B cell (primary cell): ENCODE measurements at regions of chr2 and their contacts with region 1.

Region 1: GRCh38 chr2:98012561-98012991 is 16.8 kb upstream of the TMEM131 start:
- DNase-seq: peak; percentile 91
- ATAC-seq: peak; percentile 86
- H3K4me3 ChIP-seq: peak overlapping the region in 4 of 5 experiments; percentile 9 to 55 (median 30)
- H3K4me3 Mint-ChIP-seq: peak overlapping the region; percentile 78
- H3K27ac ChIP-seq: peak overlapping the region; percentile 90 to 94
- H3K27ac Mint-ChIP-seq: peak overlapping the region; percentile 98
- H3K4me1 ChIP-seq: peaks cover 68 to 76% of the 10 kb centered on the region in 2 donors
- H3K4me1 Mint-ChIP-seq: peaks cover 66% of the 10 kb centered on the region
- H3K27me3 ChIP-seq: no peaks in the 10 kb centered on the region
- H3K27me3 Mint-ChIP-seq: no peaks in the 10 kb centered on the region
- CTCF ChIP-seq: no peak

Region 2: DNA sequence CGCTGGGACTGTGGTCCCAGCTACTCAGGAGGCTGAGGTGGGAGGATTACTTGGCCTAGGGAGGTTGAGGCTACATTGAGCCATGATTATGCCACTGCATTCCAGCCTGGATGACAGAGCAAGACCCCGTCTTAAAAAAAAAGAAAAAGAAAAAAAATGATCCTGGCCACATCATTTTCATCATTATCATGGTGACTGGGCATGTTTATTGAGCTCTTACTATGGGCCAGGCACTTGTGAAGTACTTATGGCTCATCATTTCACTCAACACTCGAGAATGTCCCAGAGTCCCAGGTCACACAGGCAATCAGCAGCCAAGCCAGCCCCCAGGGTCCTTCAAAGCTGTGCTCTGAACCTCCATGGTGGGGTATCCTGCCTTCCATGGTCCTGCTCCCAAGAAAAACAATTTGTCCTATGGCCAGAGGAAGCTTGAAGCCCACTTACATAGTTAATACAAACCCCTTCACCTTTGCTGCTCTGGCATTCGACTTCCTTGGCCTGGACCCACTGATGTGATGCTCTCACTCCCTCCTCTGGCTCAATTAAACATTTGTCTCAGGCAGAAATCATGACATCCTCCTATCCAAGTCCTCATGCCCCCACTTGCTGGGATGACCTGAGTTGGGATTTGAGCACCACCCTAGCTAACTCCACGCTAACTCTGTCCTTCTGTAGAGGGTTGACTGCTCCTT is 1255.6 kb before region 1 on chr2:
- CTCF ChIA-PET with region 1: no interaction called
- POLR2A ChIA-PET with region 1: no interaction called
- intact Hi-C with region 1: no loop called
- DNase-seq: no peak
- ATAC-seq: no peak
- H3K4me3 ChIP-seq: no peak overlapping the region
- H3K4me3 Mint-ChIP-seq: no peak overlapping the region
- H3K27ac ChIP-seq: no peak overlapping the region
- H3K27ac Mint-ChIP-seq: no peak overlapping the region
- H3K4me1 ChIP-seq: peaks cover 20 to 24% of the 10 kb centered on the region in 2 donors
- H3K4me1 Mint-ChIP-seq: peaks cover 26% of the 10 kb centered on the region
- H3K27me3 ChIP-seq: peaks cover 0 to 5% (median 0%) of the 10 kb centered on the region in 4 experiments
- H3K27me3 Mint-ChIP-seq: no peaks in the 10 kb centered on the region
- CTCF ChIP-seq: no peak

Region 3: DNA sequence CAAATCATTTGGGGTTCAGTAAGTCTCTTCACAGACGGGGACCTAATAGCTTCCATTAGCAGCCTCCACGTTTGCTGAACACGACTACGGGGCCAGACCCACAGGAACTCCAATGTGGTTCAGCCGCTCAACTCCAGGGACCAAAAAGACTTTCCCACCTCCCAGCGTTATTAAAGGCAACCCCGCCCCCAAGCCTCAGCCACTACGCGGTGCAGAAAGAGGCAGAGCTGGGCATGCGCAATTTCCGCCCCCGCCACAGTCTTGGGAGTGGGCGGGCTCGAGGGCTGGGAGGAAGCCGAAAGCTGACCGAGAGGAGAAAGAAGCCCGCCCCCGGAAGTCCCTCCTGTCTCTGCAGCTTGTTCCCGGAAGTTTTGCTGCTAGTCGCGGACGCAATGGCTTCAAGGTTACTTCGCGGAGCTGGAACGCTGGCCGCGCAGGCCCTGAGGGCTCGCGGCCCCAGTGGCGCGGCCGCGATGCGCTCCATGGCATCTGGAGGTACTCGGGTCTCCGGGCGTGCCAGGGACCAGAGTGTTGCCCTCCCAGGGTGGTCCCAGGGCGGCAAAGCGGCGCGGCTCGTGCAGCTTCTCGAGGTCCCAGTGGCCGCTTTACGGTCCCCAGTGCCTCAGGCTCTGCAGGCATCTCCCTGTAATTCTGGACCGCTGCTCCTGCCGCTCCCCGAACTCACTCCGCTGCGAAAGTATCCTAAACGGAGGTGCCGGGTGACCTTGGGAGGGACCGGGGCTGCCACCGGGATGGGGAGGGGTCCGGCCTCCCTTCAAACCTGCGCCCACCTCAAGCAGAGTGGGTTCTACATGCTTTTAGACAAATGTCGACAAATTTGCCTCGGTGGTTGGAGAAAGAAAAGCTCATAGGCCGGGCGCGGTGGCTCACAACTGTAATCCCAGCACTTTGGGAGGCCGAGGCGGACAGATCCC is 366.6 kb before region 1 on chr2 and contains the start of gene COX5B:
- CTCF ChIA-PET with region 1: no interaction called
- POLR2A ChIA-PET with region 1: no interaction called
- intact Hi-C with region 1: loop called (anchors 5 kb)
- DNase-seq: peak; percentile 98
- ATAC-seq: peak; percentile 98
- H3K4me3 ChIP-seq: peak within 1 kb of the TSS; percentile 61 to 97 (median 97)
- H3K4me3 Mint-ChIP-seq: peak within 1 kb of the TSS; percentile 100
- H3K27ac ChIP-seq: peak within 1 kb of the TSS; percentile 72 to 87
- H3K27ac Mint-ChIP-seq: peak within 1 kb of the TSS; percentile 97
- H3K4me1 ChIP-seq: peaks cover 14 to 15% of the 10 kb centered on the region in 2 donors
- H3K4me1 Mint-ChIP-seq: peaks cover 21% of the 10 kb centered on the region
- H3K27me3 ChIP-seq: no peaks in the 10 kb centered on the region
- H3K27me3 Mint-ChIP-seq: peaks cover 3% of the 10 kb centered on the region
- CTCF ChIP-seq: no peak
- total RNA-seq, gene COX5B: 104 and 111 TPM in 2 replicates

Region 4: GRCh38 chr2:97806738-97807618 is 205.6 kb before region 1 on chr2:
- CTCF ChIA-PET with region 1: interaction called, 5 read pairs
- POLR2A ChIA-PET with region 1: no interaction called
- intact Hi-C with region 1: loop called (anchors 5 kb)
- DNase-seq: peak; percentile 86
- ATAC-seq: peak; percentile 97
- H3K4me3 ChIP-seq: no peak overlapping the region
- H3K4me3 Mint-ChIP-seq: no peak overlapping the region
- H3K27ac ChIP-seq: peak overlapping the region in 1 of 2 donors; percentile 56
- H3K27ac Mint-ChIP-seq: no peak overlapping the region
- H3K4me1 ChIP-seq: peaks cover 4 to 7% of the 10 kb centered on the region in 2 donors
- H3K4me1 Mint-ChIP-seq: no peaks in the 10 kb centered on the region
- H3K27me3 ChIP-seq: no peaks in the 10 kb centered on the region
- H3K27me3 Mint-ChIP-seq: no peaks in the 10 kb centered on the region
- CTCF ChIP-seq: peak; percentile 97

Region 5: GRCh38 chr2:97911206-97911921 is 101.2 kb before region 1 on chr2:
- CTCF ChIA-PET with region 1: no interaction called
- POLR2A ChIA-PET with region 1: interaction called, 11 read pairs
- intact Hi-C with region 1: no loop called
- DNase-seq: peak; percentile 71
- ATAC-seq: peak; percentile 73
- H3K4me3 ChIP-seq: no peak overlapping the region
- H3K4me3 Mint-ChIP-seq: peak overlapping the region; percentile 17
- H3K27ac ChIP-seq: peak overlapping the region in 1 of 2 donors; percentile 37
- H3K27ac Mint-ChIP-seq: peak overlapping the region; percentile 4
- H3K4me1 ChIP-seq: peaks cover 63 to 73% of the 10 kb centered on the region in 2 donors
- H3K4me1 Mint-ChIP-seq: peaks cover 89% of the 10 kb centered on the region
- H3K27me3 ChIP-seq: no peaks in the 10 kb centered on the region
- H3K27me3 Mint-ChIP-seq: no peaks in the 10 kb centered on the region
- CTCF ChIP-seq: no peak

Region 6: GRCh38 chr2:98026927-98027522 is 14.4 kb after region 1 on chr2:
- CTCF ChIA-PET with region 1: interaction called, 11 read pairs
- POLR2A ChIA-PET with region 1: interaction called, 16 read pairs
- intact Hi-C with region 1: loop called (anchors 1 kb)
- DNase-seq: peak; percentile 84
- ATAC-seq: peak; percentile 77
- H3K4me3 ChIP-seq: peak overlapping the region in 4 of 5 experiments; percentile 7 to 58 (median 35)
- H3K4me3 Mint-ChIP-seq: peak overlapping the region; percentile 84
- H3K27ac ChIP-seq: peak overlapping the region; percentile 80 to 82
- H3K27ac Mint-ChIP-seq: peak overlapping the region; percentile 88
- H3K4me1 ChIP-seq: peaks cover 51 to 67% of the 10 kb centered on the region in 2 donors
- H3K4me1 Mint-ChIP-seq: peaks cover 52% of the 10 kb centered on the region
- H3K27me3 ChIP-seq: no peaks in the 10 kb centered on the region
- H3K27me3 Mint-ChIP-seq: no peaks in the 10 kb centered on the region
- CTCF ChIP-seq: no peak

Region 7: DNA sequence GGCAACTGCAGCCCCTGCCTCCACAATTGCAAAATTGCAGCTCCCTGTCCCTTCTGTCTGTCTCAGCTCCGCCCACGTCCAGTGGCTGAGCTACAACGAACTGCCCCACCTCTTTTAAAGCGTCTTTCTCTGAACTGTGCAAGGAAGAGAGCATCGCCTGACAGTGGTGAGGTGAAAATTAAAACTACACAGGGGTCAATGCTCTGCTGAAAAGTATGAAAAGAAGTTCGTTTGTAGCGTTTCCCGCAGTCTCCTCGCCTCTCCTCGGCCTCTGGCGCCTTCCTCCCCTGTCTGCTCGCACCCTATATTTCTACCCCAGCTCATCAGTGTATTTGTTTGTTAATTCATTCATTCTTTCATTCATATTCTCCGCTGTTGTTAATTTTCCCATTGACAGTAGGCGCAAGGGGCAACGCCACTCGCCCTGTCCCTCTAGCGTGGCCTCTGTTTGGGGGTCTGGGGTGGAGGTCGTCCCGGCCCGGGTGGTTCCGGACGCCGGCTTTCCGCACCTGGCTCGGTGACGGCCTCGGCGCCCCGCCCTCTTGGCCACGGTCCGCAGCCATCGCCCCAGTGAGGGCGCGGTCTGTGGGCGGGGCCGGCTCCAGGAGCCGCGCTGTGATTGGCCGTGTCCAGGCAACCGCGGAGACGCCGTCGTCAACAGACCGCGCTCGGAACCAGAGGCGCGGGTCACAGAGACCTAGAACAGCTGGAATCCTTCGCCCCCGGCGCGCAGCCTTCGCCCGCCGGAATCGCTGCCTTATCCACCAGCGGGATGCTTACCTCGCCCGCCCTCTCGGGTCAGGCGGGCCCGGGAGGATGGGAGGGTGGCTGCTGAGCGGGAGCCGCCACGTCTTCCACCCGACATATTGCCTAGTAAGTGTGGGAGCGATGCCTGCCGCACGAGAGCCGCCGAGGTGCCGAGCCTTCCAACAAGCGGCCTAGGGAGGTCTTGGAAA is 74.2 kb after region 1 on chr2 and contains the start of gene VWA3B:
- CTCF ChIA-PET with region 1: no interaction called
- POLR2A ChIA-PET with region 1: no interaction called
- intact Hi-C with region 1: loop called (anchors 1 kb)
- DNase-seq: peak; percentile 90
- ATAC-seq: peak; percentile 92
- H3K4me3 ChIP-seq: peak within 1 kb of the TSS; percentile 55 to 67 (median 57)
- H3K4me3 Mint-ChIP-seq: peak within 1 kb of the TSS; percentile 79
- H3K27ac ChIP-seq: peak within 1 kb of the TSS; percentile 33 to 54
- H3K27ac Mint-ChIP-seq: peak within 1 kb of the TSS; percentile 75
- H3K4me1 ChIP-seq: peaks cover 29 to 49% of the 10 kb centered on the region in 2 donors
- H3K4me1 Mint-ChIP-seq: peaks cover 47% of the 10 kb centered on the region
- H3K27me3 ChIP-seq: no peaks in the 10 kb centered on the region
- H3K27me3 Mint-ChIP-seq: no peaks in the 10 kb centered on the region
- CTCF ChIP-seq: no peak
- total RNA-seq, gene VWA3B: not detected in 2 replicates

Region 8: GRCh38 chr2:98134172-98135005 is 121.8 kb after region 1 on chr2:
- CTCF ChIA-PET with region 1: no interaction called
- POLR2A ChIA-PET with region 1: no interaction called
- intact Hi-C with region 1: loop called (anchors 1 kb)
- DNase-seq: peak; percentile 92
- ATAC-seq: peak; percentile 98
- H3K4me3 ChIP-seq: no peak overlapping the region
- H3K4me3 Mint-ChIP-seq: peak overlapping the region; percentile 32
- H3K27ac ChIP-seq: peak overlapping the region in 1 of 2 donors; percentile 31
- H3K27ac Mint-ChIP-seq: peak overlapping the region; percentile 4
- H3K4me1 ChIP-seq: peaks cover 16 to 21% of the 10 kb centered on the region in 2 donors
- H3K4me1 Mint-ChIP-seq: peaks cover 23% of the 10 kb centered on the region
- H3K27me3 ChIP-seq: no peaks in the 10 kb centered on the region
- H3K27me3 Mint-ChIP-seq: no peaks in the 10 kb centered on the region
- CTCF ChIP-seq: no peak

Region 9: GRCh38 chr2:98518090-98518489 is 505.5 kb after region 1 on chr2:
- CTCF ChIA-PET with region 1: no interaction called
- POLR2A ChIA-PET with region 1: no interaction called
- intact Hi-C with region 1: no loop called
- DNase-seq: peak; percentile 46
- ATAC-seq: no peak
- H3K4me3 ChIP-seq: no peak overlapping the region
- H3K4me3 Mint-ChIP-seq: no peak overlapping the region
- H3K27ac ChIP-seq: no peak overlapping the region
- H3K27ac Mint-ChIP-seq: no peak overlapping the region
- H3K4me1 ChIP-seq: no peaks in the 10 kb centered on the region
- H3K4me1 Mint-ChIP-seq: no peaks in the 10 kb centered on the region
- H3K27me3 ChIP-seq: no peaks in the 10 kb centered on the region
- H3K27me3 Mint-ChIP-seq: no peaks in the 10 kb centered on the region
- CTCF ChIP-seq: peak; percentile 42